K562 (cell line): ENCODE measurements at regions of chr3 and their contacts with region 1.

Region 1: GRCh38 chr3:11548721-11549131 is 95.0 kb downstream of the VGLL4 start:
- DNase-seq: peak in 1 of 4 experiments; percentile 12
- ATAC-seq: peak; percentile 25; the same call in 1 of the 3 replicates
- H3K4me3 ChIP-seq: no peak overlapping the region
- H3K27ac ChIP-seq: no peak overlapping the region
- H3K4me1 ChIP-seq: peaks cover 0 to 14% of the 10 kb centered on the region in 2 experiments; a peak in 3 of 5 replicates
- H3K27me3 ChIP-seq: no peaks in the 10 kb centered on the region
- CTCF ChIP-seq: no peak
- EP300 ChIP-seq: no peak
- POLR2A ChIP-seq: no peak
- RAD21 ChIP-seq: no peak

Region 2: DNA sequence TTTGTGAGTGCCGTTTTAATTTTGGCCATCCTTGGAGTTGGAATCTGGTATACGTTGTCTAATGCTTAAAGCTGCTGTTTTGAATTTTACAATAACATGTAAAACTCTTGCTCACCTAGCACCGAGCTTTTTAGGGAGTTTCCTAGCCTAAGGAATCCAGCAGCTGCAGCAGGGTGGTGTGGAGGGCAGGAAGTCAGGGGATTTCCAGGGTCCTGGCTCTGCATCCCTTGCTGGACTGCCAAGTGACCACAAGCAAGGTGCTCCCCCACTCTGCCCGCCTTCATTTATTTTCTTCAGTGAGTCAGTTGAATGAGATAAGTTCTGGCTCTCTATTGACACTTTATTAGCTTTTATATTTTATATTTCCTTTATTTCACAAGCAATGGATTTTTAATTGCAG is 162.8 kb before region 1 on chr3:
- CTCF ChIA-PET with region 1: no interaction called
- POLR2A ChIA-PET with region 1: no interaction called
- in situ Hi-C with region 1: no loop called
- intact Hi-C with region 1: loop called (anchors 10 kb)
- DNase-seq: no peak
- ATAC-seq: no peak
- H3K4me3 ChIP-seq: no peak overlapping the region
- H3K27ac ChIP-seq: no peak overlapping the region
- H3K4me1 ChIP-seq: no peaks in the 10 kb centered on the region; a peak in 1 of 5 replicates
- H3K27me3 ChIP-seq: no peaks in the 10 kb centered on the region
- CTCF ChIP-seq: no peak
- EP300 ChIP-seq: no peak
- POLR2A ChIP-seq: no peak
- RAD21 ChIP-seq: no peak

Region 3: GRCh38 chr3:11799791-11800190 is 251.1 kb after region 1 on chr3:
- CTCF ChIA-PET with region 1: no interaction called
- POLR2A ChIA-PET with region 1: no interaction called
- in situ Hi-C with region 1: no loop called
- intact Hi-C with region 1: no loop called
- DNase-seq: no peak
- ATAC-seq: no peak
- H3K4me3 ChIP-seq: no peak overlapping the region
- H3K27ac ChIP-seq: no peak overlapping the region
- H3K4me1 ChIP-seq: no peaks in the 10 kb centered on the region
- H3K27me3 ChIP-seq: no peaks in the 10 kb centered on the region
- CTCF ChIP-seq: no peak
- EP300 ChIP-seq: no peak
- POLR2A ChIP-seq: no peak
- RAD21 ChIP-seq: no peak